CD4-positive, alpha-beta memory T cell (primary cell): ENCODE measurements at regions of chr9 and their contacts with region 1.

Region 1: GRCh38 chr9:112278152-112278551 is 55.3 kb downstream of the PTBP3 start:
- DNase-seq: no peak
- H3K4me3 ChIP-seq: no peak overlapping the region
- H3K4me3 Mint-ChIP-seq: peak overlapping the region in 2 of 8 donors; percentile 6 to 13
- H3K27ac ChIP-seq: no peak overlapping the region
- H3K27ac Mint-ChIP-seq: peak overlapping the region in 2 of 7 donors; percentile 46 to 49
- H3K4me1 ChIP-seq: peaks cover 33% of the 10 kb centered on the region
- H3K4me1 Mint-ChIP-seq: peaks cover 42 to 73% (median 53%) of the 10 kb centered on the region in 4 donors
- H3K27me3 ChIP-seq: no peaks in the 10 kb centered on the region
- H3K27me3 Mint-ChIP-seq: no peaks in the 10 kb centered on the region

Region 2: DNA sequence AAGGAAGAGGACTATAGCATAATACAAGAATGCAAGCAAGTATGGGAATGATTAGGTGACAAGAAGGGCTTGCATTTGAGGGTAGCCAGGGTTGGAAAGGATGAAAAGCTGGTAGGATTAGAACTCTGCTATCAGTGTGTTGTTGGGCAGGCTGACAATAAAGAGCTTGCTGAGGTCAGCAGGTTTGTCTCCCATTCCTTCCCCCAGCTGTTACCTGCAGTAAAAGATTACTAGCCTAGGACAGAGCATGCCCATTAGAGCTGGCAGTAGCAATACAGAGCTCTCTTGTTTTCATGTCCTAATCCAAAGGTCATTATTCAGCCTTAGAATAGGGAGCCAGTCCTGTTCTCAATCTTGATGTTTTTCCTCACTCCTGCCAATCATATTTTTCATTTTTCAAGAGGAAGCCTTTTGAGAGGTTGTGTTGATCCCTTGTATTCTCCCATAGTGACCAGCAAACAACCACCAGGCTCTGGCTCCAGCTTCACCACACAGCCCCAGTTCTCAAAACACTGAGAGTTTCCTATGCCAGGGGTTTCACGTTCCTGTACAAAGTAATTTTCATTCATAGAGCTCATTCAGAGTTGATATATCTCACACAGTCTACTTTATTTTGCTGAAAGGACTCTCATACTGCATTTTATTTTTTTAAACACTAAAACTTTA is 1019.8 kb before region 1 on chr9:
- CTCF ChIA-PET with region 1: no interaction called
- POLR2A ChIA-PET with region 1: no interaction called
- intact Hi-C with region 1: no loop called
- DNase-seq: no peak
- H3K4me3 ChIP-seq: no peak overlapping the region
- H3K4me3 Mint-ChIP-seq: no peak overlapping the region
- H3K27ac ChIP-seq: no peak overlapping the region
- H3K27ac Mint-ChIP-seq: no peak overlapping the region
- H3K4me1 ChIP-seq: no peaks in the 10 kb centered on the region
- H3K4me1 Mint-ChIP-seq: no peaks in the 10 kb centered on the region
- H3K27me3 ChIP-seq: no peaks in the 10 kb centered on the region
- H3K27me3 Mint-ChIP-seq: peaks cover 1 to 2% of the 10 kb centered on the region in 2 donors

Region 3: GRCh38 chr9:112315331-112316257 is 37.4 kb after region 1 on chr9:
- CTCF ChIA-PET with region 1: no interaction called
- POLR2A ChIA-PET with region 1: no interaction called
- intact Hi-C with region 1: loop called (anchors 5 kb)
- DNase-seq: no peak
- H3K4me3 ChIP-seq: no peak overlapping the region
- H3K4me3 Mint-ChIP-seq: peak overlapping the region in 6 of 8 donors; percentile 42 to 95 (median 70)
- H3K27ac ChIP-seq: no peak overlapping the region
- H3K27ac Mint-ChIP-seq: peak overlapping the region; percentile 6 to 83 (median 50)
- H3K4me1 ChIP-seq: peaks cover 89% of the 10 kb centered on the region
- H3K4me1 Mint-ChIP-seq: peaks cover 49 to 92% (median 72%) of the 10 kb centered on the region in 4 donors
- H3K27me3 ChIP-seq: no peaks in the 10 kb centered on the region
- H3K27me3 Mint-ChIP-seq: no peaks in the 10 kb centered on the region